ENCODE measurements at regions of chr13 and their contacts with region 1.

Region 1: GRCh38 chr13:38686577-38687245 is at the start of gene FREM2:
- DNase-seq: peak; percentile 92 to 94
- H3K4me3 ChIP-seq: peak within 1 kb of the TSS; percentile 50 to 68 (median 63)
- H3K27ac ChIP-seq: peak within 1 kb of the TSS; percentile 7 to 69 (median 64)
- H3K4me1 ChIP-seq: peaks cover 15 to 16% of the 10 kb centered on the region in 2 donors
- H3K27me3 ChIP-seq: no peaks in the 10 kb centered on the region
- CTCF ChIP-seq: no peak
- POLR2A ChIP-seq: peak in 1 of 2 donors; percentile 93
- total RNA-seq, gene FREM2: 32.0 to 54.6 (median 46.2) TPM

Region 2: DNA sequence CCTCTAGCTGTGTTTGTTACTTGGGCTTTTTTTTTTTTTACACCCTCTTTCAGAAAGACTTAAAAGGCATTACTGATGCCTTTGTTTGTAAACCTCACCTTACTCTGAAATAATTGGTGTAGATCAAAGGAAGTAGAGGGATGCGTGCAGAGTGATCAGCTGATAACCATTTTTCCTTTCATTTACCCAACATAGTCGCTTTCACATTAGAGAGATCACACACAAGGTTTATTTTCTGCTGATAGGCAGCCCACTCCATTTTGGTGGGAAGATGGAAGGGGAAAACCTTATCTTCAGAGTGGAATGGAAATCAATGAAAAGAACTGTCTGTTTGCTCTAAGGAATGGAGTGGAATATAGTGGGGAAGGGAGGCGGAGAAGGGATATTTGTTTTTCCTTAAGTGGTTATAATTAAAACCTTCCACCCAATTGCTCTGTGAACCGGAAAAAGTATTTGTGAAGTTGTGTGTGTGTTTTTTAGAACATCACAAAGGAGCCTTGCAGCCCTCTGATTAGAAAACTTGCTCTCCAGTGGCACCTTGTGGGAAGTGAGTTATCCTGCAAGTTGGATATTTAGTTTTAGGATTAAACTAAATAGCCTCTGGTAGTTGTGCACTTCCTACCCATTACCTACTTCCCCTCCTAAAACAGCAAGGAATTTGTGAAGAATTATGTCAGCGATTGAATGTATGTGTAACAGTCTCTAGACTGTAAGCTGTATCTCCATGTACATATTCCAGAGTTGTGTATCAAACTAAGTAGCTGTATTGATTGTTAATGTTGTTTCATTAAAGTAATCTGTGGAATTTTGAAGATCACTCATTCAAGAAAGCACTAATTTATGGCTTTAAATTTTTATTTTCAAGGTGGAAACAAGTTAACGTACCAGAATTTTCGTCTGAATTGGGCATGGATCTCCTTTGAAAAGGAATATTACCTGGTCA is 77.0 kb after region 1 on chr13:
- intact Hi-C with region 1: loop called (anchors 10 kb)
- DNase-seq: peak; percentile 44 to 54
- H3K4me3 ChIP-seq: no peak overlapping the region
- H3K27ac ChIP-seq: no peak overlapping the region
- H3K4me1 ChIP-seq: no peaks in the 10 kb centered on the region
- H3K27me3 ChIP-seq: no peaks in the 10 kb centered on the region
- CTCF ChIP-seq: peak; percentile 27 to 93 (median 75)
- POLR2A ChIP-seq: no peak